SK-N-SH (cell line): ENCODE measurements at regions of chr6 and their contacts with region 1.

Region 1: DNA sequence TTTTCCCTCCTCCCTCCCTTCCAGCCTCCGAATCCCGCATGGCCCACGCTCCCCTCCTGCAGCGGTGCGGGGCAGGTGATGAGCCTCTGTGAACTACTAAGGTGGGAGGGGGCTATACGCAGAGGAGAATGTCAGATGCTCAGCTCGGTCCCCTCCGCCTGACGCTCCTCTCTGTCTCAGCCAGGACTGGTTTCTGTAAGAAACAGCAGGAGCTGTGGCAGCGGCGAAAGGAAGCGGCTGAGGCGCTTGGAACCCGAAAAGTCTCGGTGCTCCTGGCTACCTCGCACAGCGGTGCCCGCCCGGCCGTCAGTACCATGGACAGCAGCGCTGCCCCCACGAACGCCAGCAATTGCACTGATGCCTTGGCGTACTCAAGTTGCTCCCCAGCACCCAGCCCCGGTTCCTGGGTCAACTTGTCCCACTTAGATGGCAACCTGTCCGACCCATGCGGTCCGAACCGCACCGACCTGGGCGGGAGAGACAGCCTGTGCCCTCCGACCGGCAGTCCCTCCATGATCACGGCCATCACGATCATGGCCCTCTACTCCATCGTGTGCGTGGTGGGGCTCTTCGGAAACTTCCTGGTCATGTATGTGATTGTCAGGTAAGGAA is at the start of gene OPRM1:
- DNase-seq: peak; percentile 68
- H3K4me3 ChIP-seq: peak within 1 kb of the TSS in 1 of 2 experiments; percentile 51; a peak in 2 of 4 replicates
- H3K27ac ChIP-seq: peak within 1 kb of the TSS in 1 of 2 experiments; percentile 98; a peak in 2 of 4 replicates
- H3K4me1 ChIP-seq: peaks cover 0 to 5% of the 10 kb centered on the region in 2 experiments; a peak in 2 of 4 replicates
- H3K27me3 ChIP-seq: no peaks in the 10 kb centered on the region
- CTCF ChIP-seq: no peak
- EP300 ChIP-seq: no peak
- RAD21 ChIP-seq: no peak; the same call in 1 of the 2 replicates
- polyA plus RNA-seq, gene OPRM1: 0.15 and 1.0 TPM in 2 replicates

Region 2: GRCh38 chr6:153984811-153985210 is 54.5 kb before region 1 on chr6:
- CTCF ChIA-PET with region 1: no interaction called
- POLR2A ChIA-PET with region 1: no interaction called
- DNase-seq: no peak
- H3K4me3 ChIP-seq: no peak overlapping the region
- H3K27ac ChIP-seq: no peak overlapping the region
- H3K4me1 ChIP-seq: no peaks in the 10 kb centered on the region; a peak in 1 of 4 replicates
- H3K27me3 ChIP-seq: no peaks in the 10 kb centered on the region
- CTCF ChIP-seq: no peak
- EP300 ChIP-seq: no peak
- RAD21 ChIP-seq: no peak

Region 3: GRCh38 chr6:154012852-154013251 is 26.5 kb before region 1 on chr6:
- CTCF ChIA-PET with region 1: no interaction called
- POLR2A ChIA-PET with region 1: no interaction called
- DNase-seq: no peak
- H3K4me3 ChIP-seq: no peak overlapping the region
- H3K27ac ChIP-seq: no peak overlapping the region
- H3K4me1 ChIP-seq: no peaks in the 10 kb centered on the region; a peak in 2 of 4 replicates
- H3K27me3 ChIP-seq: no peaks in the 10 kb centered on the region
- CTCF ChIP-seq: no peak
- EP300 ChIP-seq: no peak
- RAD21 ChIP-seq: no peak

Region 4: DNA sequence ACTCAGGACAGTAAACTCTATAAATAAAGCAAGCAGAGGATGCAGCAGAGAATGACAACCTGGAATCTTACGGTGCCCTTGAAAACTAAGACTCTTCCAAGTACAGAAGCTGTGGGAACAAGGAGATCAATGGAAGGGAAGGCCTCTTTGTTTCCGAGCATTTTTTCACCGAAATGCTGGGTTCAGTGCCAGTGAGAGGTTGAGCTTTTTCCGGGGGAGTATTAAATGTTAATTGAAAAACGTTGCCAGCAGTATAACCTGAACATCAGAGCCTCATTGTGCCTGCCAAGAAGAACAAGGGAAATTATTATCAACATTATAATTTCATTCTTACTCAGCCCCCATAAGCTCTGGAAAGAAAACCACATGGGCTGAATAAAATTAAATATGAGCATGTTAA is 17.2 kb after region 1 on chr6:
- CTCF ChIA-PET with region 1: interaction called, 14 read pairs
- POLR2A ChIA-PET with region 1: no interaction called
- DNase-seq: no peak
- H3K4me3 ChIP-seq: no peak overlapping the region
- H3K27ac ChIP-seq: peak overlapping the region in 1 of 2 experiments; percentile 47; a peak in 2 of 4 replicates
- H3K4me1 ChIP-seq: peaks cover 0 to 2% of the 10 kb centered on the region in 2 experiments; a peak in 1 of 4 replicates
- H3K27me3 ChIP-seq: no peaks in the 10 kb centered on the region
- CTCF ChIP-seq: no peak
- EP300 ChIP-seq: no peak
- RAD21 ChIP-seq: no peak